Left ventricle myocardium superior (tissue), 1 donor: ENCODE measurements at regions of chr6 and their contacts with region 1.

Region 1: GRCh38 chr6:116010790-116011401 is 49.8 kb downstream of the FRK start:
- DNase-seq: peak; percentile 80
- ATAC-seq: peak; percentile 68

Region 2: DNA sequence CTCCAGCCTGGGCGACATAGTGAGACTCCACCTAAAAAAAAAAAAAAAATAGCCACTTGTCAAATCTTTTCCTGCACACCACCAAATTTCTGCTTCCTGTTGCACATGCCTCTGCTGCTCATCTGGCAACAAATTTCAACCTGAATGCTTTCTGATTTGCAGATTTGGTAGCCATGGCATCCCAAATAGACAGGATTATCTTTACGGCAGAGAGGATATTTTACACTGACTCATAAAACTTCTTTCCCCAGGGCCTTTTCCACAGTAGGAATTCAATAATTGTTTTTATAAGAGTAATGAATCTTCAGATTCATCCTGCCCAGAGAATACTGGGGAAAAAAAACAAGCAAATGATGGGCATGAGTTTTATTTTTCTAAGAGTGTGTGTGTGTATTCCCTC is 214.8 kb before region 1 on chr6:
- intact Hi-C with region 1: no loop called
- DNase-seq: no peak
- ATAC-seq: no peak

Region 3: GRCh38 chr6:116096979-116097816 is 86.3 kb after region 1 on chr6:
- intact Hi-C with region 1: loop called (anchors 5 kb)
- DNase-seq: no peak
- ATAC-seq: no peak